ENCODE measurements at regions of chr9 and their contacts with region 1.

Region 1: GRCh38 chr9:124040935-124041816 is 29.6 kb downstream of the LHX2 start:
- DNase-seq: peak; percentile 45
- H3K4me3 ChIP-seq: peak overlapping the region; percentile 33
- H3K27ac ChIP-seq: no peak overlapping the region
- H3K4me1 ChIP-seq: peaks cover 4% of the 10 kb centered on the region
- H3K27me3 ChIP-seq: peaks cover 39% of the 10 kb centered on the region
- CTCF ChIP-seq: peak; percentile 98

Region 2: GRCh38 chr9:123544007-123544827 is 497.0 kb before region 1 on chr9:
- intact Hi-C with region 1: loop called (anchors 1 kb)
- DNase-seq: peak; percentile 32
- H3K4me3 ChIP-seq: no peak overlapping the region
- H3K27ac ChIP-seq: no peak overlapping the region
- H3K4me1 ChIP-seq: no peaks in the 10 kb centered on the region
- H3K27me3 ChIP-seq: no peaks in the 10 kb centered on the region
- CTCF ChIP-seq: peak; percentile 70

Region 3: GRCh38 chr9:123724211-123724796 is 316.9 kb before region 1 on chr9:
- intact Hi-C with region 1: loop called (anchors 10 kb)
- DNase-seq: no peak
- H3K4me3 ChIP-seq: no peak overlapping the region
- H3K27ac ChIP-seq: no peak overlapping the region
- H3K4me1 ChIP-seq: no peaks in the 10 kb centered on the region
- H3K27me3 ChIP-seq: no peaks in the 10 kb centered on the region
- CTCF ChIP-seq: no peak

Region 4: DNA sequence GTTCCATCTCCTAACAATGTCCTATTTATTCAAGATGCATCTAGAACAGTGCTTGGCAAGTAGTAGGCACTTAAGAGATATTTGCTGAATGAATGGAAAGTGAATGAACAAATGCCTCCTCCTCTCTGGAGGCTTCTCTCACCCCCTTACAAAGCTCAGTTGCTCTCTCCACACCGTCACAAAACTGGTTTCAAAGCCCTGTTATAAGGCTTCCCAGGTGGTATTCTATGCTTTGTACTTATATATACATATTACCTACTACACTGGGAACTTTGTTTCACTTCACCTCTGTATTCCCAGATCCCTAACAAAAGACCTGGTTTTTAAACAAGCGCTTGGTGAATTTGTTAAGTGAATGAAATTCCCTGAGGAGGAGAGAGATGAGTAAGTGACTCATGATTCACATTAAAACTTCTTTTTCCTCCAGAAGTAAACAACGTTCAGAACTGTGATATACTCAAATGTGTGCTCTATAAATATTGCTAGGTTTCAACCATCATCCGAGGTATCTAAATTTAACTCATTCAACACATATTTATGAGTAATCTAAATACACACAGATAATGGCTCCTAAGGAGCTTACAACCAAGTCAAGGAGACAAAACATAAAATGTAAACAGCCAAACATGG is 147.2 kb before region 1 on chr9:
- intact Hi-C with region 1: no loop called
- DNase-seq: no peak
- H3K4me3 ChIP-seq: no peak overlapping the region
- H3K27ac ChIP-seq: no peak overlapping the region
- H3K4me1 ChIP-seq: no peaks in the 10 kb centered on the region
- H3K27me3 ChIP-seq: no peaks in the 10 kb centered on the region
- CTCF ChIP-seq: no peak